ENCODE measurements at regions of chrX and their contacts with region 1.

Region 1: GRCh38 chrX:154373340-154374306 is 811 bp downstream of the FLNA start:
- DNase-seq: peak; percentile 55
- H3K4me3 Mint-ChIP-seq: peak overlapping the region; percentile 80
- H3K27ac Mint-ChIP-seq: peak overlapping the region; percentile 14
- H3K4me1 Mint-ChIP-seq: peaks cover 26% of the 10 kb centered on the region
- H3K27me3 Mint-ChIP-seq: no peaks in the 10 kb centered on the region

Region 2: DNA sequence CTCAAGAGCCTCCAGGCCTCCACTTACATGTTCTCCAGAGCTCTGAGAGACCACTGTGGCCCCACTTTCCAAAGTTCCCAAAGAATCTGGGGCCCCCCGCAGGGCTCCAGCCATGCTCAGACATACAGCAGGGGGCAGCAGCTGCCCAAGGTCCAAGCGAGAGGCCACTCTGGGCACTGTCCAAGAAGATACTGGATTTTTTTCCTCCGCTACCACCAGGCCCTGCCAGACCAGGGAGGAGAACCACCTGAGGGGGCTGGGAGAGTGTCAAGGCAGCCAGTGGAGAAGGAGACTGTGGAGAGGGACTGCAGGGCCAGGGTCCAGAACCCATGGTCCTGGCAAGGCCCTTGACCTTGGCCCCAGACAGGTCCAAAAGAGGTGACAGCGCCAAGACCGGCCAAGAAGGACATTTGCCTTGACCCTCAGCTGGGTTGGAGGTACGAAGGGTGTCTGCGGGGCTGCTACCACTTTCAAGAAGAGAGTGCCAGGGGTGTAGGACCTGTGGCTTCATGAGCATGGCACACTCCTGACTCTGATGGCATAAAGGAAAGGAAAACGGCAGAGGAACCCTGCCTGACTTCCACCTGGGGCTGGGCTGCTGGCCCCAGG is 10.8 kb after region 1 on chrX:
- CTCF ChIA-PET with region 1: interaction called, 17 read pairs
- DNase-seq: no peak
- H3K4me3 Mint-ChIP-seq: no peak overlapping the region
- H3K27ac Mint-ChIP-seq: no peak overlapping the region
- H3K4me1 Mint-ChIP-seq: peaks cover 12% of the 10 kb centered on the region
- H3K27me3 Mint-ChIP-seq: no peaks in the 10 kb centered on the region

Region 3: GRCh38 chrX:154534862-154535670 is 161.4 kb after region 1 on chrX:
- CTCF ChIA-PET with region 1: interaction called, 15 read pairs
- DNase-seq: peak; percentile 89
- H3K4me3 Mint-ChIP-seq: no peak overlapping the region
- H3K27ac Mint-ChIP-seq: peak overlapping the region; percentile 58
- H3K4me1 Mint-ChIP-seq: peaks cover 13% of the 10 kb centered on the region
- H3K27me3 Mint-ChIP-seq: no peaks in the 10 kb centered on the region

Region 4: DNA sequence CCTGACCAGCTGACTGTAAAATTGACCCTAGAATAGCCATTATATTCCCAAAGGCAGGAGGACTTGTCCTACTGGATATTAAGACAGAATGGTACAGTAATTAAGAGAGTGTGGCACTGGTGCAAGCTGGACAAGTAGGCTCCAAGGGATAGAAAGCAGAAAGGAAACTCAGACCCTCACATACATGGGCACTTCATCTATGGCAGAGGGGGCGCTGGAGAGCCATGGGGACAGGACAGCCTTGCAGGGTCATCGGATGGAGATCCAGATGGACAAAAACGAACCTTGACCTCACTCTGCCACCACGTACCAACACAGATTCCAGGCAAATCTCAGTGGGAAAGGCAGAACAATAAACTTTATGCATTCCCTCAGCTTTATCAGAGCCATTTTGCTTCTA is 336.7 kb after region 1 on chrX:
- CTCF ChIA-PET with region 1: no interaction called
- DNase-seq: no peak
- H3K4me3 Mint-ChIP-seq: no peak overlapping the region
- H3K27ac Mint-ChIP-seq: no peak overlapping the region
- H3K4me1 Mint-ChIP-seq: peaks cover 35% of the 10 kb centered on the region
- H3K27me3 Mint-ChIP-seq: no peaks in the 10 kb centered on the region

Measured in activated naive CD4-positive, alpha-beta T cell treated with anti-CD3 and anti-CD28 coated beads, Interleukin-2, amount 10 ng/mL, durations not matched to agents 7 days and 5 days (primary cell).